OCI-LY7 (cell line): ENCODE measurements at regions of chr6 and their contacts with region 1.

Region 1: GRCh38 chr6:328136-328670 is 35.9 kb downstream of the DUSP22 start:
- DNase-seq: peak; percentile 90
- H3K4me3 ChIP-seq: peak overlapping the region; percentile 58
- H3K27ac ChIP-seq: peak overlapping the region; percentile 98
- H3K4me1 ChIP-seq: peaks cover 98% of the 10 kb centered on the region
- CTCF ChIP-seq: no peak

Region 2: GRCh38 chr6:305371-306206 is 22.6 kb before region 1 on chr6:
- CTCF ChIA-PET with region 1: interaction called, 6 read pairs
- POLR2A ChIA-PET with region 1: interaction called, 180 read pairs
- intact Hi-C with region 1: loop called (anchors 1 kb)
- DNase-seq: peak; percentile 74
- H3K4me3 ChIP-seq: peak overlapping the region; percentile 2
- H3K27ac ChIP-seq: peak overlapping the region; percentile 71
- H3K4me1 ChIP-seq: peaks cover 62% of the 10 kb centered on the region
- CTCF ChIP-seq: no peak

Region 3: GRCh38 chr6:313087-313486 is 15.1 kb before region 1 on chr6:
- CTCF ChIA-PET with region 1: interaction called, 30 read pairs
- POLR2A ChIA-PET with region 1: interaction called, 180 read pairs
- intact Hi-C with region 1: no loop called
- DNase-seq: peak; percentile 63
- H3K4me3 ChIP-seq: peak overlapping the region; percentile 28
- H3K27ac ChIP-seq: peak overlapping the region; percentile 57
- H3K4me1 ChIP-seq: peaks cover 89% of the 10 kb centered on the region
- CTCF ChIP-seq: no peak

Region 4: DNA sequence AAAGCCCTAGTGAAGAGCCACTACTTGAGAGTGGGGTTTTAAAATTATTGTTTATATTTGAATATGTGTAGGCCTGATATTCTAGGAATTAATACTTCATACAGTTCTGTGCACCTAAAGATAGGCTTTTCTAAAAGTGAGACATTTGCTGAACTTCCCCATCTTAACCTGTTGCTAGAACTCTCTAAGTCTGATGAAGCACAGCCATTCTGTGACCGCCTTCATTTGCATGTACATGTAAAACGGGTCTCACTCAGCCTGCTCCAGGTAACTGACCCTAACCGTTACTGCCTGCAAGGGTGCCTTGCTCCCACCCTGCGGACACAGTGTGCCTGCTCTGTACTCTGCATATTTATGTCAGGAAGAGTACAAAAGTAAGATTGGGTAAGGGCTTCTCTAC is 19.0 kb after region 1 on chr6:
- CTCF ChIA-PET with region 1: interaction called, 8 read pairs
- POLR2A ChIA-PET with region 1: interaction called, 77 read pairs
- intact Hi-C with region 1: no loop called
- DNase-seq: peak; percentile 87
- H3K4me3 ChIP-seq: peak overlapping the region; percentile 10
- H3K27ac ChIP-seq: peak overlapping the region; percentile 77
- H3K4me1 ChIP-seq: peaks cover 62% of the 10 kb centered on the region
- CTCF ChIP-seq: no peak

Region 5: DNA sequence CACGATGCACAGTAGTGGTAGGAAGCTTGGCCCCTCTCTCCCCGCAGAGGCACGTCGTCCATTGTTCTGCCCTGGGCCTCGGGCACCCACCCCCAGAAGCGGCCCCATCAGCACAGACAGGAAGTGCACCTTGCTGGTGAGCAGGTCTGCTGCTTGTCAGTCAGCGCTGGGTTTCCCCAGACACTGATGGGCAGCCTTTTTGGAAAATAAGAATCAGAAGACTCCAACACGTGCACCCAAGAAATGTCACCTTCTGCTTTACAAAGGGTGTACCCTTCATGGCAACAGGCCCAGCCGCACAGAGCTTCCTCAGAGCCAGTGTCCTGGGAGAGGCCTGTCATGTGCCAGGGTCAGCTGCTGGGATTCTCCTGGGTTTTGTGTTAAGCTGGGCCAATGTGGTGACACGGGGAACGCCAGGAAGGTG is 28.6 kb after region 1 on chr6:
- CTCF ChIA-PET with region 1: interaction called, 8 read pairs
- POLR2A ChIA-PET with region 1: interaction called, 77 read pairs
- intact Hi-C with region 1: no loop called
- DNase-seq: peak; percentile 83
- H3K4me3 ChIP-seq: peak overlapping the region; percentile 10
- H3K27ac ChIP-seq: peak overlapping the region; percentile 86
- H3K4me1 ChIP-seq: peaks cover 100% of the 10 kb centered on the region
- CTCF ChIP-seq: no peak

Region 6: DNA sequence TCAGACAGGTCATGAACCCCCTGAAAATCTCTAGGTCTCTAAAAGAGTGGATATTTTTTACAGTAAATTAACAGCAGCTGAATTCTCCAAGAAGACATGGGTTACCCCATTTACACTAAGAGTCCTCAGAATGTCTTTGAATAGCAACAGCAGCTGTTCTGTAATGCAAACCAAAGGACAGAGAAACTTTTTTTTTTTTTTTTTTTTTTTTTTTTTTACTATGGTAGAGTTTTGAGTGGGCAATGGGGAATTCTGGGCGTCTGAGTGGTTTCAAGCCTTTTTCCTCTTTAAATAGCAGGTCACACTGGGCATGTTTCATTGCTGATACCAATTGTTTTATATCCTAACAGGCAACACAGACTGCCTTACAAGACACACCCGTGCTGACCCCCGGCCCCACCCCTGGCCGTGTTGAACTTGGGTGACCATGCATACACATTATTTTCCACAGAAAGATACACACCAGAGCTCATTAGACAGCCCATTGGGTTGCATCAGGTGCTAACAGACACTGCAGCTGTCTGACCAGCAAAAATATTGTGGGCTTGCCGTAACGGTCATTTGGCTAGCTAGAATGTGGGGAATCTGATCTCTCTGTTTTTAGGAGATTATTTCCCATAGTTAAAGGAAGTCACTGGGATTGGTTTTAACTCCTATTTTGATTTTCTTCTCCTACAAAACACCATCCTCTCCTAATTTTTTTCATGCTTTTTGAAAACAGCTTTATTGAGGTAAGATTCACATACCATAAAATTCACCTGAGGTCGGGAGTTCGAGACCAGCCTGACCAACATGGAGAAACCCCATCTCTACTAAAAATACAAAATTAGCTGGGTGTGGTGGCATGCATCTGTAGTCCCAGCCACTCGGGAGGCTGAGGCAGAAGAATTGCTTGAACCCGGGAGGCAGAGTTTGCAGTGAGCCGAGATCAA is 36.7 kb after region 1 on chr6:
- CTCF ChIA-PET with region 1: interaction called, 8 read pairs
- POLR2A ChIA-PET with region 1: interaction called, 69 read pairs
- intact Hi-C with region 1: loop called (anchors 1 kb)
- DNase-seq: peak; percentile 97
- H3K4me3 ChIP-seq: peak overlapping the region; percentile 45
- H3K27ac ChIP-seq: peak overlapping the region; percentile 95
- H3K4me1 ChIP-seq: peaks cover 84% of the 10 kb centered on the region
- CTCF ChIP-seq: no peak

Region 7: GRCh38 chr6:741410-742339 is 413.5 kb after region 1 on chr6:
- CTCF ChIA-PET with region 1: no interaction called
- POLR2A ChIA-PET with region 1: no interaction called
- intact Hi-C with region 1: no loop called
- DNase-seq: no peak
- H3K4me3 ChIP-seq: no peak overlapping the region
- H3K27ac ChIP-seq: no peak overlapping the region
- H3K4me1 ChIP-seq: no peaks in the 10 kb centered on the region
- CTCF ChIP-seq: no peak